Gastrocnemius medialis (tissue), 4 donors: ENCODE measurements at regions of chr3 and their contacts with region 1.

Region 1: GRCh38 chr3:197899833-197900478 is 50.0 kb upstream of the RPL35A start:
- DNase-seq: no peak
- ATAC-seq: no peak
- H3K4me3 ChIP-seq: no peak overlapping the region
- H3K27ac ChIP-seq: no peak overlapping the region
- H3K4me1 ChIP-seq: no peaks in the 10 kb centered on the region
- H3K27me3 ChIP-seq: peaks cover 0 to 3% (median 0%) of the 10 kb centered on the region in 3 donors
- CTCF ChIP-seq: no peak
- POLR2A ChIP-seq: no peak

Region 2: GRCh38 chr3:197835509-197835908 is 64.4 kb before region 1 on chr3:
- in situ Hi-C with region 1: loop called in 1 of 4 experiments (anchors 10 kb)
- intact Hi-C with region 1: no loop called
- DNase-seq: no peak
- ATAC-seq: no peak
- H3K4me3 ChIP-seq: no peak overlapping the region
- H3K27ac ChIP-seq: no peak overlapping the region
- H3K4me1 ChIP-seq: no peaks in the 10 kb centered on the region
- H3K27me3 ChIP-seq: no peaks in the 10 kb centered on the region
- CTCF ChIP-seq: no peak
- POLR2A ChIP-seq: no peak